Aorta (tissue), 5 donors: ENCODE measurements at regions of chr4 and their contacts with region 1.

Region 1: DNA sequence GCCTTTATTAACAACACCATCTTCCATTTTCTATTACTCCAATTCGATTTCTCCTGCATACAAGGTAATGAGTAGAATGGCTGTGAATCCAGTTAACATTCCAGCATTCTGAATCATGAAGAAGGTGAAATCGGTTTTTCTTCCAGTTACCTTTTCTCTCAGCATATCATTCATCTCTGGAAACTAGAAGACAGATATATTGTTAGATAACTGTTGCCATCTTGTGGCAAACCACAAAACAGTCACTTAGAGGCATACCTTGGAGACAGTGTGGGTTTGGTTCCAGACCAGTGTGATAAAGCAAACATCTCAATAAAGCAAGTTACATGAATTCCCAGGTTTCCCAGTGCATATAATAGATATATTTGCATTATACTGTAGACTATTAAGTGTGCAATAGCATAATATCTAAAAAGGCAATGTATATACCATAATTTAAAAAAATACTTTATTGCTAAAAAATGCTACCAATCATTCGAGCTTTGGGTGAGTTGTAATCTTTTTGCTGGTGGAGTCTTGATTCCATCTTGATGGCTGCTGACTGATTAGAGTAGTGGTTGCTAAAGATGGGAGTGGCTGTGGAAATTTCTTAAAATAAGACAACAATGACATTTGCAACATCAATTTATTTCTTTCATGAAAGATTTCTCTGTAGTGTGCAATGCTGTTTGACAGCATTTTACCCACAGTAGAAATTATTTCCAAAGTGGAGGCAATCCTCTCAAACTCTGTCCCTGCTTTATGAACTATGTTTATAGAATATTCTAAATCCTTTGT is 82.1 kb downstream of the SLC39A8 start:
- DNase-seq: no peak
- ATAC-seq: no peak
- H3K4me3 ChIP-seq: no peak overlapping the region
- H3K27ac ChIP-seq: no peak overlapping the region
- H3K4me1 ChIP-seq: no peaks in the 10 kb centered on the region
- H3K27me3 ChIP-seq: no peaks in the 10 kb centered on the region

Region 2: DNA sequence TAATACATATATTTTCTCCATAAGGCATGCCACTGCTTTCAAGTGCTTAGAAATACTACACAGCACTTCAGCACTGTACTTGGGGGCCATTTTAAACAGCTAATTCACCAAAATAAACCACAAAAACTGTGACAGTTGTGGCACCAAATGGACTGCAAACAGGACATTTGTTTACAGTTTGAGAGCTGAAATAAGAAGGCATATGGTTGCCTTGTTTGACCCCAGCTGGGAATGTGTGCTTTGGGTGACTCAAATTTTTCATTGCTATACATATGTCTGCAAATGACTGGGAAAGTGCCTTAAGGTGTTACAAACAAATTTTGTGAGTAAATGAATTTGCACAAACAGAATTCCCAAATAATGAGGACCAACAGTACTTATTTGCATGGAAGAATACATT is 348.4 kb before region 1 on chr4:
- intact Hi-C with region 1: loop called in 1 of 2 experiments (anchors 10 kb)
- DNase-seq: no peak
- ATAC-seq: no peak
- H3K4me3 ChIP-seq: no peak overlapping the region
- H3K27ac ChIP-seq: no peak overlapping the region
- H3K4me1 ChIP-seq: no peaks in the 10 kb centered on the region
- H3K27me3 ChIP-seq: no peaks in the 10 kb centered on the region

Region 3: GRCh38 chr4:102362922-102363432 is 99.8 kb after region 1 on chr4:
- intact Hi-C with region 1: no loop called
- DNase-seq: no peak
- ATAC-seq: no peak
- H3K4me3 ChIP-seq: no peak overlapping the region
- H3K27ac ChIP-seq: no peak overlapping the region
- H3K4me1 ChIP-seq: no peaks in the 10 kb centered on the region
- H3K27me3 ChIP-seq: no peaks in the 10 kb centered on the region

Region 4: GRCh38 chr4:102760645-102761295 is 497.6 kb after region 1 on chr4 and contains the start of gene MANBA:
- intact Hi-C with region 1: no loop called
- DNase-seq: peak; percentile 93 to 95
- ATAC-seq: peak; percentile 98
- H3K4me3 ChIP-seq: peak within 1 kb of the TSS; percentile 75 to 85
- H3K27ac ChIP-seq: peak within 1 kb of the TSS in 1 of 2 donors; percentile 35
- H3K4me1 ChIP-seq: no peaks in the 10 kb centered on the region
- H3K27me3 ChIP-seq: no peaks in the 10 kb centered on the region
- total RNA-seq, gene MANBA: 20.9 to 41.4 TPM